Dendritic cell treated with granulocyte-macrophage colony-stimulating factor and Interleukin-4, amounts not matched to agents 40 ng/mL and 50 ng/mL, for 4 days (primary cell): ENCODE measurements at regions of chr2 and their contacts with region 1.

Region 1: GRCh38 chr2:17719562-17720371 is 33.8 kb downstream of the SMC6 start:
- H3K4me3 Mint-ChIP-seq: no peak overlapping the region
- H3K27ac Mint-ChIP-seq: no peak overlapping the region
- H3K4me1 Mint-ChIP-seq: no peaks in the 10 kb centered on the region
- H3K27me3 Mint-ChIP-seq: no peaks in the 10 kb centered on the region

Region 2: GRCh38 chr2:17830053-17831034 is 110.6 kb after region 1 on chr2:
- intact Hi-C with region 1: loop called (anchors 1 kb)
- H3K4me3 Mint-ChIP-seq: peak overlapping the region; percentile 47
- H3K27ac Mint-ChIP-seq: no peak overlapping the region
- H3K4me1 Mint-ChIP-seq: peaks cover 11% of the 10 kb centered on the region
- H3K27me3 Mint-ChIP-seq: peaks cover 20% of the 10 kb centered on the region

Region 3: GRCh38 chr2:18178736-18179349 is 459.1 kb after region 1 on chr2:
- intact Hi-C with region 1: loop called (anchors 2 kb)
- H3K4me3 Mint-ChIP-seq: no peak overlapping the region
- H3K27ac Mint-ChIP-seq: no peak overlapping the region
- H3K4me1 Mint-ChIP-seq: no peaks in the 10 kb centered on the region
- H3K27me3 Mint-ChIP-seq: no peaks in the 10 kb centered on the region